Activated CD4-positive, alpha-beta memory T cell treated with anti-CD3 and anti-CD28 coated beads for 36 hours (primary cell): ENCODE measurements at regions of chr3 and their contacts with region 1.

Region 1: DNA sequence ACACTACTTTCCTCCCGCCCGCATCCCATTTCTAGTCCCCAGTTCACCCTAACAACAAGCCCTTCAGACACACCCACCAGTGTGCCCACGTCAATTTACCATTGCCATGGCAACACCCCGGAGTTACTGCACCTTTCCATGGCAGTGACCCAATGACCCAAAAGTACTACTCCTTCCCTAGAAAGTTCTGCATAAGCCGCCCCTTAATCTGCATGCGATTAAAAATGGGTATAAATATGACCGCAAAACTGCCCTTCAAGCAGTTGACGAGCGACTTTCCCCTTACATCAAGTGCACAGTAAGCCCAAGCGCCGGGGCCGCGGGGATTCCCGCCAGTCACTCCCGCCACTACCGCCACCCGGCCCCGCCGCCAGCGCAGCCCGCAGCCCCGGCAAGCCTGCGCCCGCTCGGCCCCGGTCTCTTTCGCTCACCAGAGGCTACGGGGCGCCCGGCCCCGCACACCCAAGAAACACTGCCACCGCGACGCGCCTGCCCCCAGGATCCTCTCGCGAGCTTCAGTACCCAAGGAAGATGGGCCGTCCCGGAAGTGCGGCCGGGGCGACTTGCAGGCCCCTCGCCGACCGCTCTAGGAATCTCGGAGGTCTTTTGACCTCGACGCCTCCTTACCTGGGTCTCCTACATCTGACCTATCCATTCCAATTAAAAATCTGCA is 27.2 kb upstream of the ZNF502 start:
- DNase-seq: peak; percentile 68
- H3K4me3 Mint-ChIP-seq: peak overlapping the region; percentile 70
- H3K27ac Mint-ChIP-seq: no peak overlapping the region
- H3K4me1 Mint-ChIP-seq: peaks cover 11% of the 10 kb centered on the region
- H3K27me3 Mint-ChIP-seq: peaks cover 30% of the 10 kb centered on the region

Region 2: GRCh38 chr3:44624749-44625480 is 60.3 kb before region 1 on chr3 and contains the start of gene ZNF197:
- CTCF ChIA-PET with region 1: no interaction called
- POLR2A ChIA-PET with region 1: no interaction called
- intact Hi-C with region 1: loop called (anchors 1 kb)
- DNase-seq: peak; percentile 78
- H3K4me3 Mint-ChIP-seq: peak within 1 kb of the TSS; percentile 80
- H3K27ac Mint-ChIP-seq: peak within 1 kb of the TSS; percentile 47
- H3K4me1 Mint-ChIP-seq: peaks cover 20% of the 10 kb centered on the region
- H3K27me3 Mint-ChIP-seq: no peaks in the 10 kb centered on the region
- total RNA-seq, gene ZNF197: 9.1 to 9.9 TPM